OCI-LY7 (cell line): ENCODE measurements at regions of chr12 and their contacts with region 1.

Region 1: DNA sequence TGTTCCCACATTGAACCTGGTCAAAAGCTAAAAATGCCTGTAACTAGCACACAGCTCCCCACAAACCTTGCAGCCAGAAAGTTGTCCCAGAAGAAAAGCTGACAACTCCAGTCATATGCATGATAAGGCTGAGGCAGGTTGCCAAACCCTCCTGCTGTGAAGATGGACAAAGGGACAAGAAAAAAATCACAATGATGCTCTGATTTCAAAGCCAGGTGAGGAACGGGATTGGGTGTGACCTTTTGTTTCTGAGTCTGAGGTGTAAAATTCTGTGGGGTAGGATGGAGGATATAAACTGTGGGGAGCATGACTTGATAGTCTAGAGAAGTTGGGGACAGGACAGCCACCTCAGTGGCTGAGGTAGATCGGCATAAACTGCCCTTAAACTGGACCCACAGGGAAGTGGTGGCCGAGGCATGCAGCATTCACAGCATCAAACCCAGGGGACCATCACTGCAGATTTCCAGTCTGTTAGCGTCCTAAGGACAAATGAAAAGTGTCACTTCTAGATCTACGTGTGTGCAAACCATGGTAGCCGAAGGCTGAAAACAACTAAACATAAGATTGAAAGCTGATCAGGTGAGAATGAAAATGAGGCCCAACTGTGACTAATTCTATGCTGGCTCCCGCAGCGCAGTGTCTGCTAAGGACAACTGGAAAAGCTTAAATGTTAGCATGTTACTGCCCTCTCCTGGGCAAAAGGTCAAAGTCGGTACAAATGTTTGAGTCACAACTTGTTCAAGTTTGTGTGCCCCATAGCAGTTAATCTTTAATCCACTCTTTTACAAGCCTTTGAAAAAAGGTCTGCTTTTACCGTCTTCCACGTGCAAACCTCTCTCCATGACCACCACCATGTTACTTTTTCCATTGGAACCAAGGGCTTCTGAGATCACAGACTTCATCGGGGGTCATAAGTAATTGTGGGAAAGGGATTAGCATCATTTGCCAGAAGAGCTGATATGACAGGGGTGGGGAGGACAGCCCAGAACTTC is 39.8 kb downstream of the GRIN2B start:
- DNase-seq: peak; percentile 46
- H3K4me3 ChIP-seq: no peak overlapping the region
- H3K27ac ChIP-seq: no peak overlapping the region
- H3K4me1 ChIP-seq: no peaks in the 10 kb centered on the region
- CTCF ChIP-seq: peak; percentile 80

Region 2: DNA sequence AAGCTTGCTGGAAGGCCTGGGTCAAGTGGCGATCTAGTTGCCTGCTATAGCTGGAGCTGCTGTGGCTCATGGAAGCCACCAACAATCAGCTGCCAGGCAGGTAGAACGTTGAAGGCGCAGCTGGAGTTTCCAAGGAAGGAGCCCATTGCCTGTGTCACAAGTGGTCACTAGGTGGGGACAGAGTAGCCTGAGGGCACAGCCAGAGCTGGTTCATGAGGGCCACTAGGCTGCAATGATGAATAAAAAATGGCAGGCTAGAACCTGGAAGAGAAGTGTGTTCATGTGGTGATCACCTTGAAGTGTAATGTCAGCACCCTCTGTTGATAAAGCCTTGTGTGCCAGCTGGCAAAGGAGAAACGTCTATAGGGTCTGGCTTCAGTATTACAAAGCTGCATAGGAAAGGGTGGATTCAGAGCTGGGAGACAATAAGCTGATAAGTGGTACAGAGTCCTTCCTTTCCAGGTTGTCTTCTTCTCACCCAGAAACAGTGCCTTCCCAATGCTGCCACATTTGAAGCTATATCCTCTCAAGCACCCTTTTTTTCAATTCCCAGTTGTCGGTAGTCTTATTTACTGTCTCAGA is 579.2 kb before region 1 on chr12:
- CTCF ChIA-PET with region 1: no interaction called
- POLR2A ChIA-PET with region 1: no interaction called
- intact Hi-C with region 1: loop called (anchors 10 kb)
- DNase-seq: peak; percentile 58
- H3K4me3 ChIP-seq: no peak overlapping the region
- H3K27ac ChIP-seq: no peak overlapping the region
- H3K4me1 ChIP-seq: no peaks in the 10 kb centered on the region
- CTCF ChIP-seq: peak; percentile 89